Activated T-helper 2 cell treated with anti-CD3 and anti-CD28 coated beads, Interferon-gamma antibody, Interleukin-2, Interleukin-4, amounts not matched to agents 10 μg/mL and 5 μg/mL and 100 μg/mL, durations not matched to agents 14 hours and 24 hours and 36 hours (primary cell): ENCODE measurements at regions of chrX and their contacts with region 1.

Region 1: DNA sequence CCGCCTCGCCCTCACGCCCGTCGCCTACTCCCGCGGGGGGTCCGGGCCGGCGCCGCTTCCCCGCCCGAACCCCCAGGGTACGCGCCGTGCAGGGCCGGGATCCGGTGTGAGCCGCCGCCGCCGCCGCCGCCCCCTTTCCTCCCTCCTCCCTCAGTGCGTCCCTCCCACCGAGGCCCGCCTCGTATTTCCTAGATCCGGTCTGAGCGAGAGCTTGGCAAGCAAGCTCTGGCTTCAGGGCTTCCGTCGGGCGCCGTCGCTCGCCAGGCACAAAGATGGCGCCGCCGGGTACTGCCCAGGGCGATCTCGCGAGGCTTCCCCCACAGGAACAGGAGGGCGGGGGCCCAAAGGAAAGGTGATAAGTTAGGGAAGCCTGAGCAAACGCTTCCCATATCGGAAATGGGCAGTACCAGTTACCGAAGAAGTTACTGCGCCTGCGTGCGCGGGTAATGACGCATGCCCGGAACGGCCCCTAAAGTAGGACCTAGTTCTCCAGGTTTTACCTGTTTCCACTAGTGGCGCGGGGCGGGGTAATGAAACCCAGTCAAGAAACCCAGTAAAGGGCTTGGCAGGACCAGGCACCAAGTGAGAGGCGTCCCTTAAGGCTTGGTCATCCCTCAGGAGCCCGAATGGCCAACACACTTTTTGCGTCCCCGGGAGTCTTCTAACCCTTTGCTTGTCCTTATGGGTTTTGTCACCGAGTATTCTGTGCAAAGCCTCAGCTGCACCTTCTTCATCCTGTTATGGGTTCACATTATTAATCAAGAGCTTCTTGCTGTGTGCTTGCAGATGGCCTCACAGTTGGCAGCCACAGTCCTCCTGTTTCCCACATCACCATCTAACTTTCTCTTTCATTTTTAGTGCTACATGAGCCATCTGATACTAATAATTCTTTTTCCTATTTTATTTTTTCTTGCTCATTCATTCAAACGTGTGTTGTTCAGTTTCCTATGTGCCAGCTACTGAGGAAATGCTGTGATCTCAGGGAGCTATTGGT is at the start of gene TAB3:
- DNase-seq: peak; percentile 91
- H3K4me3 Mint-ChIP-seq: peak within 1 kb of the TSS; percentile 81
- H3K27ac Mint-ChIP-seq: peak within 1 kb of the TSS; percentile 93
- H3K4me1 Mint-ChIP-seq: peaks cover 27% of the 10 kb centered on the region
- H3K27me3 Mint-ChIP-seq: no peaks in the 10 kb centered on the region
- total RNA-seq, gene TAB3: 24.2 and 24.9 TPM in 2 replicates

Region 2: GRCh38 chrX:30577362-30577991 is 312.0 kb before region 1 on chrX and contains the start of gene TASL:
- intact Hi-C with region 1: loop called (anchors 5 kb)
- DNase-seq: peak; percentile 27
- H3K4me3 Mint-ChIP-seq: peak within 1 kb of the TSS; percentile 92
- H3K27ac Mint-ChIP-seq: peak within 1 kb of the TSS; percentile 96
- H3K4me1 Mint-ChIP-seq: peaks cover 18% of the 10 kb centered on the region
- H3K27me3 Mint-ChIP-seq: no peaks in the 10 kb centered on the region
- total RNA-seq, gene TASL: 5.2 and 5.4 TPM in 2 replicates

Region 3: GRCh38 chrX:30713061-30713525 is 176.4 kb before region 1 on chrX:
- intact Hi-C with region 1: loop called (anchors 1 kb)
- DNase-seq: peak; percentile 31
- H3K4me3 Mint-ChIP-seq: peak overlapping the region; percentile 20
- H3K27ac Mint-ChIP-seq: peak overlapping the region; percentile 86
- H3K4me1 Mint-ChIP-seq: peaks cover 47% of the 10 kb centered on the region
- H3K27me3 Mint-ChIP-seq: no peaks in the 10 kb centered on the region

Region 4: GRCh38 chrX:30781711-30782444 is 107.6 kb before region 1 on chrX:
- intact Hi-C with region 1: loop called (anchors 5 kb)
- DNase-seq: no peak
- H3K4me3 Mint-ChIP-seq: no peak overlapping the region
- H3K27ac Mint-ChIP-seq: no peak overlapping the region
- H3K4me1 Mint-ChIP-seq: peaks cover 22% of the 10 kb centered on the region
- H3K27me3 Mint-ChIP-seq: no peaks in the 10 kb centered on the region

Region 5: GRCh38 chrX:30900227-30900626 is 10.8 kb after region 1 on chrX:
- intact Hi-C with region 1: loop called (anchors 1 kb)
- DNase-seq: no peak
- H3K4me3 Mint-ChIP-seq: no peak overlapping the region
- H3K27ac Mint-ChIP-seq: no peak overlapping the region
- H3K4me1 Mint-ChIP-seq: peaks cover 18% of the 10 kb centered on the region
- H3K27me3 Mint-ChIP-seq: peaks cover 9% of the 10 kb centered on the region